ENCODE measurements at regions of chr2 and their contacts with region 1.

Region 1: DNA sequence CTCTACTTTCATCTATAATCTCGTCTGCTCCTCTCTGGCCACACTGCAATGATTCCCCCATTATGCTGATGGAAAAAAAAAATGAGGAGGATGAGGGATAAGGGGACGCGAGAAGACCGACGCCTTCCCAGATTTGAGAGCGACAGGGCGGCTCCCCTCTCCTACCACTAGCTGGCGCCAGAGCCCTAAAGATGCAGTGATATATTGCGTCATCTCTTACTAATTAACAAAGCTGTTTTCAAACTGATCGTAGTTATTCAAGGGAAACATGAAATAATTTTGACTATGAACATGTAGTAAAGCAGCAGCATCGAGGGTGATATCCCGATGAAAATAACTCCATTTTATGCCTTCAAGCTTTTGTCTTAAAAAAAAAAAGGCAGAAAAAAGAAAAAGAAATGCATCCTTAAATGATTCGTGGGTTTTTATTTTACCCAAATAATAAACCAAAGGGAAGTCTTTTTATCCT is 48.0 kb upstream of the HNRNPA3 start:
- DNase-seq: no peak
- H3K4me3 ChIP-seq: peak overlapping the region; percentile 44
- CTCF ChIP-seq: peak; percentile 98

Region 2: DNA sequence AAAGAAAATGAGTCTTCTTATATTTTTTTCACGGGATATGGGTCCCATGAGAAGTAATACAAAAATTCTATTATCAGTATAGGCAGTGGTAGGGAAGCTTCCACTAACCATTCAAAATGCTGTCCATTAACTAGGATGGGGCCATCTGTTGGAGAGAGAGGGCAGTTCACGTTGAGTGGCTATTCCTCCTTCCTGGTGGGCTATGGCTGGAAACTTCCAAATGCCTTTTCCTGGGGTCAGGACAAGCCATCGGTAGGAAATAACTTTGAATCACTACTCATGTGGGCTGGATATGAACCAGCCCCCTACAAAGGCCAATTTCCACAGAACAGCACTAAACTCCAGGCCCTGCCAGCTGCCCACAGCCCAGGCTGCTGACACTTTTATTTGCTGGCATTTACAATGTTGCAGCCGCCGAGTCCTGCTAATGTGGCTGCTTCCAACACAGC is 108.1 kb before region 1 on chr2:
- CTCF ChIA-PET with region 1: no interaction called
- POLR2A ChIA-PET with region 1: no interaction called
- DNase-seq: no peak
- H3K4me3 ChIP-seq: no peak overlapping the region
- CTCF ChIP-seq: no peak

Region 3: DNA sequence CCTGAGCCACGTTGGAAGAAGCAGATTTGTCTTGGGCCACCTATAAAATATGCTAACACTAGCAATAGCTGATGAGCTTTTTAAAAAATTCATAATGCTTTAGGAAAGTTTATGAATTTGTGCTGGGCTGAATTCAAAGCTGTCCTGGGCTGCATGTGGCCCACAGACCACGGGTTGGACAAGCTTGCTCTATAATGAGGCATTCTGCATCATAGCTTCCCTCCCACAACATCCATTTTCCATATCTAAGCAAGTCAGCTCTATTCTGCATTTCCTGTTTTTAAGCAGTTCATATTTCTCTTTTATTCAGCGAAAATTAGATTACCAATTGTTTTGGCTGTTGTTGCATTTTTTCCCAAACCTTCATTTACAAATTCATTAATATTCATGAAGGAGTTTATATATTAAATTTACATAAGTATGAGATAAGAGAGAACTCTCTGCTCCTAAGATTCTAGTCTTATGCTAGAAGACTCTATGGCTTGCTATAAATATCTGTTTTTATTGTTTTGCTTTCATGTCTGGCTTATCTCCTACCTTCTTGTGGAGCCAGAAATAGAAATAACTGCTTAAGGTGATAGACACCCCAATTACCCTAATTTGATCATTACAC is 66.5 kb before region 1 on chr2:
- CTCF ChIA-PET with region 1: no interaction called
- POLR2A ChIA-PET with region 1: no interaction called
- DNase-seq: no peak
- H3K4me3 ChIP-seq: no peak overlapping the region
- CTCF ChIP-seq: no peak

Region 4: GRCh38 chr2:177129610-177130009 is 35.0 kb before region 1 on chr2:
- CTCF ChIA-PET with region 1: no interaction called
- POLR2A ChIA-PET with region 1: no interaction called
- DNase-seq: no peak
- H3K4me3 ChIP-seq: no peak overlapping the region
- CTCF ChIP-seq: no peak

Region 5: DNA sequence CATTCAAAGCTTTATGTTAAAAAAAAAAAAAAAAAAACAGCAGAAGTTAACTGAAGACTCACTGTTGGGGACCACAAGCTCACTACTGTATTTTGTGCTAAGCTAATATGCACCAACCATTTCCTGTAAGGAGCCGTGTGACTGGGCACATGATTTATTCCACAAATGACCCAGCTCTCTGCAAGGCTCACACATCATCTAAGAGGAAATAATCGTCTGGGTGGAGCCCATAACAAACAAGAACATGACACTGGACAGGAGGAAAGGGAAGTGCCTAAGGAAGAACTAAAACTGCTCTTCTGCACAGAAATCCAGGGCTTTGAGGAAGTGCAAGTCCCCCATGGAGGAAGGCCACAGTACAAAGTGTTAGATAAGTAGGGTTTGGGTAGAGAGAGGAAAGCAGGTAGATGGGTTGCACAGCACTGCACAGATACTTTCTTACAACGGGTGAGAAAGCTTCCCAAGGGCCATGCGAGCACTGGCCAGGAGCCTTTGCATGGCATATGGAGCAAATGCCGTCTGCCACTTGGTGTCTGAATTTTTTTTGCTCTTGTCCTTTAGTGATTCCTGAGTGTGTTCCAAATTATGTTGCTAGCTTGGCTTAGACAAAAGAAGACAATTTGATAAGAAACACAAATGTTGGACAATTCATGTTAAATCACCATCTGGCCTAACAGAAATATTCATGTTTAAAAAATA is 75.5 kb after region 1 on chr2:
- CTCF ChIA-PET with region 1: interaction called, 14 read pairs
- POLR2A ChIA-PET with region 1: no interaction called
- DNase-seq: no peak
- H3K4me3 ChIP-seq: no peak overlapping the region
- CTCF ChIP-seq: no peak

Region 6: GRCh38 chr2:177314194-177314593 is 149.6 kb after region 1 on chr2:
- CTCF ChIA-PET with region 1: interaction called, 12 read pairs
- POLR2A ChIA-PET with region 1: no interaction called
- DNase-seq: peak; percentile 64
- H3K4me3 ChIP-seq: no peak overlapping the region
- CTCF ChIP-seq: no peak

Region 7: DNA sequence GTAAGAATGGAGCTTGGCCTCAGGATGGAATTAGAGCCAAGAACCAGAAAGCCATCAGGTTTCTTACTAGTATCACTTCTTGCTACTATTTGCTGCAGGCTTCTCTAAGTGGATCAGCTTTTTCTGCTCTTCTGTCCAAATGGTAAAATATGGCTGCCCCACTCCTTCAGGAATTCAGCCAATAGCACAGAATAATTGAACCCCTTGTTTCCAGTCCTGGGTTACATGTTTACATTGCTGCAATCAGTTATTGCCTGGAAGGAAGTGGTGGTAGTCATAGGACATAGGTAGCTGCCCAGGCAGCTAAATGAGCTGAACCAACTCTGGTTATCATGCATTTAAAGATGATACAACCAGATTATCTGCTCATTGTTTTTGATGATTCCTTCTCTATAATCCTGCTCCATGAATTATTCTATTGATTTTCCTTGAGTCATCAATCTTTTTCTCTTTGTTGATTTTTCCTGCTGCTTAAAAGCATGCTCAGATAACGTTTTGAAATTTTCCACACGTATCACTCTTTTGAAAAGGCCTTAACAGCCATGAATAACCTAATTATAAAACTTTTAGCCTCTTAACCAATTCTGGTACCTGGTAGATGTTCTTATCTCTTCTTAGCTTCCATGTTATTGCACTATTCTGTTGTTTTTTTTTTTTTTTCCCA is 240.5 kb after region 1 on chr2:
- CTCF ChIA-PET with region 1: interaction called, 11 read pairs
- POLR2A ChIA-PET with region 1: no interaction called
- DNase-seq: no peak
- H3K4me3 ChIP-seq: no peak overlapping the region
- CTCF ChIP-seq: no peak

Region 8: DNA sequence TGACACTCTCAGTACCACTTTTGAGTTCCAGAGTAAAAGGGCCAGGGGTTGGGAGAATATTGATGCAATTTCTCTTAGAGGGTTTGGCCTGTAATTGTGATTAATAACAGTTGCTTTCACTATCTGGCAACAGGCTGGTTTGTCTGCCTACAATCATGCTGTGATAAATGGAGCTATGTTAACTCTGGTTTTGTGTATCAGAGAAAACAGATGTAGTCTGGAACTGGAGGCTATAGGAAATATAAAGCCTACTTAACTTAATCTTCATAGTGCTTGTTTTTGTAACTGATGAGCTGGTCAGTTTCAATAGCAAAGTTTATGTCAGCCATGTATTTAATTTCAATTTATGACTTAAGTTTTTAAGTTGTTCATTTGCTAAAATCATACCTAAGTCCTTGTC is 365.9 kb after region 1 on chr2:
- CTCF ChIA-PET with region 1: no interaction called
- POLR2A ChIA-PET with region 1: no interaction called
- DNase-seq: no peak
- H3K4me3 ChIP-seq: no peak overlapping the region
- CTCF ChIP-seq: no peak

Region 9: GRCh38 chr2:177604271-177605065 is 439.9 kb after region 1 on chr2:
- CTCF ChIA-PET with region 1: interaction called, 14 read pairs
- POLR2A ChIA-PET with region 1: no interaction called
- DNase-seq: peak; percentile 38
- H3K4me3 ChIP-seq: peak overlapping the region; percentile 25
- CTCF ChIP-seq: peak; percentile 74